Activated T-helper 2 cell treated with anti-CD3 and anti-CD28 coated beads, Interferon-gamma antibody, Interleukin-2, Interleukin-4, amounts not matched to agents 10 μg/mL and 5 μg/mL and 100 μg/mL, durations not matched to agents 14 hours and 24 hours and 36 hours (primary cell): ENCODE measurements at regions of chr12 and their contacts with region 1.

Region 1: DNA sequence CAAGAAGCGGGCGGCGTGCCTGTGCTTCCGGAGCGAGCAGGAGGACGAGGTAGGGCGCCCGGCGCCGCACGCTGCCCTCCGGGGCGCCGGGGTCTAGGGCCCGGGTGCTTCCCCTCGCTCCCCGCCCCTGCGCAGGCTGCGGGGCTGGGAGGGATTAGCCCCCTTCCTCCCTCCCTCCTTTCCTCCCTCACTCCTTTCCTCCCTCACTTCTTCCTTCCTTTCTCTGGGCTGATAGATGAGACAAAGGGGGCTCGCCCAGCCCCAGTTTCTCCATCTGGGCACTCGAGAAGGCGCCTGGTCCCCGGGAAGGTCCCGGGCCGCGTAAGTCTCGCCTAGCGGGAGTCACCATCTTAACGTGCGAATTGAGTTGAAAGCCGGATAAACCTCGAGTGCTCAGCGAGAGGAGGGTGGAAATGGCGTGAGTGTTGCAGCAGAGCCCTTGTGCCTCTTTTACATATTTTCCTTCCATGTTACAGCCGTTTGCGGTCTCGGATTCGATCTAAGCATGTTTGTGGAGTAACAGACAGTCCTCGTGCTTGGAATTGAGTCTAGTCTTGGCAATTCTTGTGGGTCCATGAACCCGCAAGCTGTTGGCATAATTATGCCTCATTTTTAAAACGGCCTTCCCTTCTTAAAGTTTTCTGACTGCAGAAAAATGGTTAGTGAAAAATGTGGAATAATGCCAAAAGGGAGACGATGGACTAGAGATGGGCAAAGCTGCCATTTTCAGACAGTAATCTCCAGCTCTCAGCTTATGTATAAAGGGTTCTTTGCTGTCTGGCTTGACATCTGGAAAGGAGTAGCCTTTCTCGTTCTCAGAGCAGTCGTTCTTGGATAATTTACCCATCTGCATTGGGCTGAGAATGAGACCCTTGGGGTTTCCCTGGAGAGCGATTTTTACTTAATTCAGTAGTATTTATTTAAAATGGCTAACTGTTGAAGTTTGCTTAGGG is 924 bp downstream of the NUDT4 start:
- DNase-seq: peak; percentile 55
- H3K4me3 Mint-ChIP-seq: peak overlapping the region; percentile 100
- H3K27ac Mint-ChIP-seq: peak overlapping the region; percentile 100
- H3K4me1 Mint-ChIP-seq: peaks cover 40% of the 10 kb centered on the region
- H3K27me3 Mint-ChIP-seq: peaks cover 2% of the 10 kb centered on the region

Region 2: DNA sequence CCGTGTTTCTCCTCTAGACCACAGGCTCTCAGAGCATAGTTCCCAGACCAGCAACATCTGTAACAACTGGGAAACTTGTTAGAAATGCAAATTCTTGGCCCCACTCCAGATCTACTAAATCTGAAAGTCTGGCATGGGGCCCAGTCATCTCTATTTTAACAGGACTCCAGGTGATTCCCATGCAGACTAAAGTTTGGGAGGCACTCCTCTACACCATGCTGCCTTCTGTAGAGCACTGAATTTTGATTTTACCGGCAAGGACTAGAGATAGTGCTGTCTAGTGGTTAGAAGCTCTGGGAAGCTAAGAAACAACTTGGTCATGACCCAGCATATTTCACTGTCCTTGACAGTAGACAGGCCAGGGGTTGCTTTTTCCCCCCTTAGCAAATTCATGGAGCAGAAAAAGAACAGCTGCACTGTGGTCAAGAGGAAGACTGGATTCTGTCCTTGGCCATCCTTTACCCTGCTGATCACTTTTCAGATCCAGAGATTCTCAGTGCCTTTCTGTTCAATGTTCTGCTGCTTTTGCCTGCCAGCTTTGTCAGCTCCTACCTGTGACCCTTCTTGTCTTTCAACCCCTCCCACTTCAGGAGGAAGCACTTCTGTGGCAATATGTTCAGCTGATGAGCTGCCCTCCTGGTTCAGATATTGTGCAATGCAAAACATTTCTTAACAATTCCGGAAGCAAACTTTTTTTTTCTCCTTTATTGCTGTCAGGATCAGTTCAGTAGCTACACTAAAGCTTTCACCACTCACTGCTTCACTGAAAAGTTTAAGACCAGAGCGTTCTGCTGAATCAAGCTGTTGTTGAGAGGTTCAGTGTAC is 134.7 kb before region 1 on chr12:
- intact Hi-C with region 1: loop called (anchors 5 kb)
- DNase-seq: no peak
- H3K4me3 Mint-ChIP-seq: no peak overlapping the region
- H3K27ac Mint-ChIP-seq: peak overlapping the region; percentile 2
- H3K4me1 Mint-ChIP-seq: peaks cover 37% of the 10 kb centered on the region
- H3K27me3 Mint-ChIP-seq: no peaks in the 10 kb centered on the region

Region 3: GRCh38 chr12:93397412-93397811 is 18.8 kb after region 1 on chr12:
- intact Hi-C with region 1: no loop called
- DNase-seq: no peak
- H3K4me3 Mint-ChIP-seq: no peak overlapping the region
- H3K27ac Mint-ChIP-seq: no peak overlapping the region
- H3K4me1 Mint-ChIP-seq: peaks cover 3% of the 10 kb centered on the region
- H3K27me3 Mint-ChIP-seq: no peaks in the 10 kb centered on the region

Region 4: GRCh38 chr12:93425736-93426411 is 47.2 kb after region 1 on chr12:
- intact Hi-C with region 1: no loop called
- DNase-seq: no peak
- H3K4me3 Mint-ChIP-seq: no peak overlapping the region
- H3K27ac Mint-ChIP-seq: no peak overlapping the region
- H3K4me1 Mint-ChIP-seq: peaks cover 59% of the 10 kb centered on the region
- H3K27me3 Mint-ChIP-seq: no peaks in the 10 kb centered on the region

Region 5: DNA sequence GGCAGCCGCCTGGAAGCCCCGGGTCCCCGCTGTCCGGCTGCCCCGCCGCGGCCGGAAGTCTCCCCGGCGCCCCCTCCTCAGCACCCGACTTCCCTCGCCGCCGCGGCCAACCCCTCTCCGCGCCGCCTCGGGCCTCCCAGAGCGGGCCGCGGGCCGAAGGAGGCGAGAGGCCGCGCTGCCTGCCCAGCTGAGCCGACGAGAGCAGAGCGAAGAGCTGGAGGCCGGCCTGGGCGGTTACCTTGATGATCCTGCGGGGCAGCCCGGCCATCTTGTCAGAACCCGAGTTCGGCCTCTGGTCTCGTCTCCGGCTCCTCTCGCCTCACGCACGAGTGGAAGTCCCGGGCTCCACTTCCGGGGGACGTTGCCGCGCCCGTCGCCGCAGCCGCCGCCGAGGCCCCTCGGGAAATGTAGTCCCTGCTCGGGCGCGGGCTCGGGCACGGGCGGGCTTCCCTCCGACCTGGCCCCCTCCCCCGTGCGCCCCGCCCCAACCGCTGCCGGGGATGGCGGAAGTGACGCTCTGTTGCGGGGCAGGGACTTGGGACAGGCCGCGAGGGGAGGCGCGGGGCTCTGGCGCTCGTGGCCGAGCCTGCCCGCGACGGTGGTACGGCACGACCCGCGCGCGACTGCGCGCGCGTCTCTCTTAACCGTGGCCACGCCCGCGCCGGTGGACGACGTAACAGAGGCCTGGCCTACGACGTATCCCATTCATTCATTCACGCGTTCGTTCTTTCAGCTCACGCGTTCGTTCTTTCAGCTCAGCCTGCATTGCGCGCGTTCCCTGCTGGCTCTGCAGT is 63.2 kb after region 1 on chr12 and contains the start of gene UBE2N:
- intact Hi-C with region 1: loop called (anchors 2 kb)
- DNase-seq: peak; percentile 94
- H3K4me3 Mint-ChIP-seq: peak within 1 kb of the TSS; percentile 98
- H3K27ac Mint-ChIP-seq: peak within 1 kb of the TSS; percentile 95
- H3K4me1 Mint-ChIP-seq: peaks cover 38% of the 10 kb centered on the region
- H3K27me3 Mint-ChIP-seq: no peaks in the 10 kb centered on the region
- total RNA-seq, gene UBE2N: 258 and 261 TPM in 2 replicates

Region 6: GRCh38 chr12:93467351-93468007 is 88.8 kb after region 1 on chr12 and contains the start of gene MRPL42:
- intact Hi-C with region 1: loop called (anchors 1 kb)
- DNase-seq: peak; percentile 91
- H3K4me3 Mint-ChIP-seq: peak within 1 kb of the TSS; percentile 86
- H3K27ac Mint-ChIP-seq: peak within 1 kb of the TSS; percentile 86
- H3K4me1 Mint-ChIP-seq: peaks cover 29% of the 10 kb centered on the region
- H3K27me3 Mint-ChIP-seq: no peaks in the 10 kb centered on the region
- total RNA-seq, gene MRPL42: 80.5 and 89.3 TPM in 2 replicates

Region 7: DNA sequence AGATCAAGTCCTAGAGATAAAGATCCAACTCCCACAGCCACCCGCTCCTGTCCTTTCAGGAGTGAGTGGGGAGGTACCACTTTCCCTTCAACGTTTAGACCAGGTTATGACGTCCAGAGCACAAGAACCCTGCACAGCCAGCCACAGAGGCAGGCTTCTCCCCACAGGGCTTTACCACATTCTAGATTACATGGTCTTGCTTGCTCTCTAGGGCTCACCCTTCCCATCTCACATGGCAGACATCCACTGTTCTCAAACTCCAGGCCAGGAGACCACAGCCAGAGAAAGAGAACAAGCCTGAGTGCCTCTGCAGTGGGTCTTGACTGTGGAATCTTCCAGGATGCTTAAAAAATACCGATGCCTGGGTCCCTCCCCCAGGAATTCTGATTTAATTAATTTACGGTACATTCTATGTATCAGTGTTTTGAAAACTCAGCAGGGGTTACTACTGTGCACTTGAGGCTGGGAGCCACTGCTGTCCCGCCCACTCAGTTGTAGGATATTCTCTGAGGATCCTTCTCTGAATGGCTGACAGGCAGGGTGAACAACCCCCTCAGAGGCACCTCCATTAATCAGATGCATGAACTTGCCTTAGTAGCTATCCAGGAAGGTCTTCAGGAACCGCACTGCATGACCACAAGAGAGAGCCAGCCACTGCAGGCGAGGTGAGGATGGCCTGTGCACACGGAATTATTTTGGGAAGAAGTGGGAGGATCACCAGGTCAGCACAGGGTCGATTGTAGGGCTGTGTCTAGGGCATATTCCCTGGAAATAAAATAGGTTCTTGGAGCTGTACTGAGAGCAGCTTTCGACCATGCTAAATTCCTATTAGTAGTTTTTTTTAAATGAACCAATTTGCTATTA is 172.3 kb after region 1 on chr12:
- intact Hi-C with region 1: no loop called
- DNase-seq: no peak
- H3K4me3 Mint-ChIP-seq: no peak overlapping the region
- H3K27ac Mint-ChIP-seq: no peak overlapping the region
- H3K4me1 Mint-ChIP-seq: no peaks in the 10 kb centered on the region
- H3K27me3 Mint-ChIP-seq: peaks cover 3% of the 10 kb centered on the region